ENCODE measurements at regions of chr3 and their contacts with region 1.

Region 1: DNA sequence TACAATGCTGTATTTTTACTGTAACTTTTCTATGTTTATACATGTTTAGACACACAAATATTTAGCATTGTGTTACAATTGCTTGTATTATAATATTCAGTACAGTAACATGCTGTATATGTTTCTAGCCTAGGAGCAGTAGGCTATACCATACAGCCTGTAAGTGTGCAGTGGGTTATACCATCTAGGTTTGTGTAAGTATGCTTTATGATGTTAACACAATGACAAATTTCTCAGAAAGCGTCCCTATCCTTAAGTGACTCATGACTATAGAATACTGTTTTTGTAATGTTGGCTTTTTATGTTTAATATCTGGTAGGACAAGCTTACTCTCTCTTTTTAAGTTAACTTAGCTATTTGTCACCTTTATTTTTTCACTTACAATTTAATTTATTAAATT is 127.5 kb upstream of the THRB start:
- DNase-seq: no peak
- H3K4me3 ChIP-seq: no peak overlapping the region
- H3K27ac ChIP-seq: no peak overlapping the region
- H3K4me1 ChIP-seq: no peaks in the 10 kb centered on the region
- H3K27me3 ChIP-seq: no peaks in the 10 kb centered on the region
- CTCF ChIP-seq: no peak

Region 2: GRCh38 chr3:25820366-25820765 is 1198.2 kb after region 1 on chr3:
- CTCF ChIA-PET with region 1: no interaction called
- POLR2A ChIA-PET with region 1: interaction called, 26 read pairs
- intact Hi-C with region 1: no loop called
- DNase-seq: peak in 1 of 2 experiments; percentile 29
- H3K4me3 ChIP-seq: no peak overlapping the region
- H3K27ac ChIP-seq: no peak overlapping the region
- H3K4me1 ChIP-seq: no peaks in the 10 kb centered on the region
- H3K27me3 ChIP-seq: no peaks in the 10 kb centered on the region
- CTCF ChIP-seq: no peak